Activated naive CD4-positive, alpha-beta T cell treated with anti-CD3 and anti-CD28 coated beads for 36 hours (primary cell): ENCODE measurements at regions of chr4 and their contacts with region 1.

Region 1: GRCh38 chr4:52545099-52546069 is 113.7 kb downstream of the USP46 start:
- DNase-seq: peak; percentile 71
- H3K4me3 Mint-ChIP-seq: no peak overlapping the region
- H3K27ac Mint-ChIP-seq: no peak overlapping the region
- H3K4me1 Mint-ChIP-seq: no peaks in the 10 kb centered on the region
- H3K27me3 Mint-ChIP-seq: peaks cover 10% of the 10 kb centered on the region

Region 2: GRCh38 chr4:52376132-52376704 is 169.2 kb before region 1 on chr4:
- CTCF ChIA-PET with region 1: interaction called, 7 read pairs
- intact Hi-C with region 1: loop called (anchors 10 kb)
- DNase-seq: peak; percentile 25
- H3K4me3 Mint-ChIP-seq: no peak overlapping the region
- H3K27ac Mint-ChIP-seq: no peak overlapping the region
- H3K4me1 Mint-ChIP-seq: no peaks in the 10 kb centered on the region
- H3K27me3 Mint-ChIP-seq: peaks cover 15% of the 10 kb centered on the region